ENCODE measurements at regions of chr2 and their contacts with region 1.

Region 1: DNA sequence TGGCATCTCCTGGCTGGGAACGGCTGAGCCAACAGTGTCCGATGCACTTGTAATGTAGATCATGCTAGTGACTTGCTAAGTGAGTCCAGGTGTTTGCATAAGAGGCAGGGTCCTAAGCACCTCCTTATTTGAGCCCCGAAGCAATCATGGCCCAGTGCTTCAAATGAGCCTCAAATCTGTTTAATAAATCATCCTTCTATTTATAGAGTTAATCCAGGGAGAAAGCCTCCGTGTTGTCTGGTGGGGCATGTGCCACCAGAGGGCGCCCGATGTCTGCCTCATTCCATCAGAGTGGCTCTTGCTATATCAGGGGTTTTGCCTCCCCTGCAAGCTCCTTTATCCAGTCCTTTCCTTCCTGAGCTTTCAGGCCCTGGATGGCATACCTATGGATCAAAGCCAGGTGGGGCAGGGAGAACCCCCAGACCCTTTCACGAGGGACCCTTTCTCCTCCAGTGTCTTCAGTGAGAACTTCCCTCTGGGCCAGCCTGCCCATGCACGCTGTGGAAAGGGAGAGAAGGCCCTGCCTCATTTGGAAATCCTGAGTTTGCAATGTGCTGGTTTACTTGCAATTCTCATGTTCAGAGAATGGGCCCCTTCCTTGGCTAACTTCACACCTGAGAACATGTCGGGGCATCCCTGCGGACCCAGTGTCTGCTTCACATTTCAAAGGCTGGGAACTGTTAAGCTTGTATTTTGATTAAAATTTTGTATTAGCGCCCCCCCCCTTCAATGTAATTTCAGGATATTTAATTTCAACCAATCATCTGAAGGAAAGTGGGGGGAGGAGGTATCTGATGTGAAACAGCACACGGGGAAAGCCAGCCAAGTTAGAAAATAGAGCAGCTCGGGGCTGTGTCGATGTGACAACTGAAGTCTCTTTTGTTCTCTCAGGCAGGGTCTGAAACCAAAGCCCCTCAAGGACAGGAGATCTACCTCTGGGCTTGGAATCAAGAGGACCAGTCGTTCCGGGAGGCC is 39.7 kb downstream of the RDH14 start:
- DNase-seq: peak; percentile 50 to 92 (median 78)
- ATAC-seq: peak; percentile 87 to 97 (median 94)
- H3K4me3 ChIP-seq: no peak overlapping the region
- H3K27ac ChIP-seq: no peak overlapping the region
- H3K4me1 ChIP-seq: peaks cover 0 to 4% (median 0%) of the 10 kb centered on the region in 3 donors
- H3K27me3 ChIP-seq: no peaks in the 10 kb centered on the region
- CTCF ChIP-seq: peak; percentile 71 to 83 (median 82)

Region 2: GRCh38 chr2:18362696-18363349 is 157.9 kb before region 1 on chr2:
- intact Hi-C with region 1: no loop called
- DNase-seq: no peak
- ATAC-seq: no peak
- H3K4me3 ChIP-seq: no peak overlapping the region
- H3K27ac ChIP-seq: no peak overlapping the region
- H3K4me1 ChIP-seq: no peaks in the 10 kb centered on the region
- H3K27me3 ChIP-seq: no peaks in the 10 kb centered on the region
- CTCF ChIP-seq: no peak

Region 3: DNA sequence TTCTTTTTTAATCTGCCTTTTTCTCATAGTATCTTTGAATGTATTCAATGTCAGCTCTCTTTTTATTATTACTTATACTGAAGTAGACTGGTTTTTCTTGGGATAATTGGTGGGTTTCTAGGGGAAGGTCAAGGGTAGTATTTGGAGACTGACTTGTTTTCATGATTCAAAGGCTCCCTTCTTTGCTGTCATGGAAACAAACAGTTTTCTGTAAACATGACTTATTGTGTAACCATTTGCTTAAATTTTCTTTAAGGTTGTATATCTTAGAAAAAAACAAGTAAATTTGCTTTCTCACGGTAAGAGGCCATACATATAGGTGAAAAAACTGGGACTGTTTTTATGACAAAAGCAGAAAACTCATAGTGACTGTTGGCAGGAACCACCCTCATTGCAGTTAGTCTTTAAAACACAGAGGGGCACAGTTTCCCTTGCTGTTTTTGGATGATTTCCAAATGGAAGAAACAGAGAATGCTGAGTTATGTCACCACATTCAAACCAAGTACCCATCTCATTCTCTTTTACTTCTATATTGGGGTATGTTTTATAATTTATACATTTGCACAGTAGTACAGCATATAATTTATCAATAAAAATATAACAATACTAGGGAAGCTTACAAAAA is 45.5 kb after region 1 on chr2:
- intact Hi-C with region 1: no loop called
- DNase-seq: no peak
- ATAC-seq: no peak
- H3K4me3 ChIP-seq: no peak overlapping the region
- H3K27ac ChIP-seq: no peak overlapping the region
- H3K4me1 ChIP-seq: peaks cover 0 to 2% (median 0%) of the 10 kb centered on the region in 3 donors
- H3K27me3 ChIP-seq: no peaks in the 10 kb centered on the region
- CTCF ChIP-seq: no peak

Region 4: DNA sequence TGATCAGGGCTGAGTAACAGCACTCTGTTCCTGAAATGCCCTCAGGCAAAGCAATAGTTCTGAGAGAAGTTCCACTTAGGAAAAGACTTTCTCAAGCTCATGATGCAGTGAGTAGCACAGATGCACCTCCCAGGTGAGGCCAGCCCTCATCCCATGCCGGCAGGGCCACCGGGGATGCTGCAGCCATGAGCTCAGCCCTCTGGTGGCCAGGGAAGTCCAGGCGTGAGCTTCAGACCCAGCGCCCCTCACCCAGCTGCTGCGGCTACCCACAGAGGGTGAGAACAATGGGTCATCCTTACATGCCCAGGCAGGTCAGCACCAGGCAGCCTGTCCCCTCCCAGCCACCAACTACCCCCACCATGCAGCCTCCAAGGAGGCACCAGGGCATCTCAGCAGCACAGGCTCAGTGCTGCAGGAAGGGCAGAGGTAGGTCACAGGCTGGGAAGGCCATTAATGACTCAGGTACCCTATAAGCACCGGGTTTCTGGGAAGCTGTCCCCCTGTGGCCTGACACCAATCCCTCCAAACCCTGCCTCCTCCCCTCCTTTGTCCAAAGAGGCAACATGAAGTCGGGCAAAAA is 1330.5 kb after region 1 on chr2:
- intact Hi-C with region 1: loop called in 1 of 3 experiments (anchors 10 kb)
- DNase-seq: no peak
- ATAC-seq: no peak
- H3K4me3 ChIP-seq: no peak overlapping the region
- H3K27ac ChIP-seq: no peak overlapping the region
- H3K4me1 ChIP-seq: no peaks in the 10 kb centered on the region
- H3K27me3 ChIP-seq: no peaks in the 10 kb centered on the region
- CTCF ChIP-seq: no peak

Region 5: GRCh38 chr2:19863303-19864041 is 1342.7 kb after region 1 on chr2:
- intact Hi-C with region 1: loop called in 2 of 3 experiments (anchors 10 kb)
- DNase-seq: peak; percentile 37 to 91 (median 72)
- ATAC-seq: peak; percentile 90 to 97 (median 94)
- H3K4me3 ChIP-seq: peak overlapping the region in 1 of 4 donors; percentile 29
- H3K27ac ChIP-seq: no peak overlapping the region
- H3K4me1 ChIP-seq: peaks cover 0 to 4% (median 0%) of the 10 kb centered on the region in 3 donors
- H3K27me3 ChIP-seq: no peaks in the 10 kb centered on the region
- CTCF ChIP-seq: peak; percentile 91 to 96 (median 94)